ENCODE measurements at regions of chr12 and their contacts with region 1.

Region 1: DNA sequence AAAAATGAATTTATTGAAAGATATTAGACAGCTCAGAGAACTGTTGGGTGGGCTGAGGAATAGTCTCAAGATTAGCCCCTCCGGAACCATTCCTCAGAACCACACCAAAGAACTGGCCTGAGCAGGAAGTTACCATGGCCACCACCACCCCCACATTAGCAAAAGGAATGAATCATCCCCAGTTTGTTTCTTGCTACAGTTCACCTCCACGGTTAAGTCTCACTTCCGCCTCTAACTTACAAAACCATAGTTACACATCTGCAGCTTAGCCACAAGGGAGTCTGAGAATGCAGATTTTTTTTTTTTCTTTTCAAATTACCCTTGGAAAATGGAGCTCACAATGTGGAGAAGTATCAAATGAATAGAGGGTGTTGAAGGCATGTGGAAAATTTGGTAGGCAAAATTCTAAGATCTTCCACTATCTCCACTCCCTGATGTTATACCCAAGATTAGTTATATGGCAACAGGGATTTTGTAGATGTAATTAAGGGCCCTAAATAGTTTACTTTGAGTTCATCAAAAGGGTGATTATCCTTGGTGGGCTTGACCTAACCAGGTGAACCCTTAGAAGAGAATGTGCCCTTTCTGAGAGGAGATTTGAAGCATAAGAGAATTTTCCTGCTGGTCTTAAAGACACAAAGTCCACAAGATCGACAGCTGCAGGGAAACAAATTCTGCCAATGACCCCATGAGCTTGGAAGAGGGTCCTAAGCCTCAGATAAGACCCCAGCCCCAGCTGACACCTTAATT is 129.8 kb upstream of the KRR1 start:
- DNase-seq: peak; percentile 78
- H3K4me3 Mint-ChIP-seq: peak overlapping the region; percentile 1
- H3K27ac Mint-ChIP-seq: peak overlapping the region; percentile 79
- H3K4me1 Mint-ChIP-seq: peaks cover 31% of the 10 kb centered on the region
- H3K27me3 Mint-ChIP-seq: no peaks in the 10 kb centered on the region

Region 2: DNA sequence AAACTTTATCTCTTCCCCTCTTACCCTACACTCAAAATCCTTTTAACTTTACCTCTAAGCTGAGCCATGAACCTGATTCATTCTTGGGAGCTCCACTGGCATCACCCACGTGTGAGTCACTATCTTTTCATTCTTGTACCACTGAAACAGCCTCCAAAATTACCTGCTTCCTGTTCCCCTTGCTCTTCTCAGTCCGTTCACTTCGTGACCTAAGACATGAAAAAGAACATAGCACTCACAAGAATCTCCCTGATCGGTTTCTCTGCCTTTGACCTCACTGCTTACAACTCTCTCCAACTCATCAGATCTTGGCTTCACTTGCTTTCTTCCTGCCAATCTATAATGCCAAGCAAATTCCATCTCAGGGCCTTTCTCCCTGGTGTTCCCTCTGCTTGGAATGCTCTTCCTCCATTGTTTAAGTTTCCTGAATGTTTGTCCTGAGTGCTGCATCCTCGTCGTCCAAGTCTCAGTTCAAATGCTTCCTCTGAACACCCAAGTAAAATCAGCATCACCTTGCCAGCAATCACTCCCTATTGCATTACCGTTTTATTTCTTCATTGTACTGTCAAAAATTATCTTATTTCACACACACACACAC is 151.5 kb before region 1 on chr12:
- intact Hi-C with region 1: loop called (anchors 2 kb)
- DNase-seq: peak; percentile 63
- H3K4me3 Mint-ChIP-seq: peak overlapping the region; percentile 39
- H3K27ac Mint-ChIP-seq: peak overlapping the region; percentile 52
- H3K4me1 Mint-ChIP-seq: peaks cover 22% of the 10 kb centered on the region
- H3K27me3 Mint-ChIP-seq: no peaks in the 10 kb centered on the region

Region 3: DNA sequence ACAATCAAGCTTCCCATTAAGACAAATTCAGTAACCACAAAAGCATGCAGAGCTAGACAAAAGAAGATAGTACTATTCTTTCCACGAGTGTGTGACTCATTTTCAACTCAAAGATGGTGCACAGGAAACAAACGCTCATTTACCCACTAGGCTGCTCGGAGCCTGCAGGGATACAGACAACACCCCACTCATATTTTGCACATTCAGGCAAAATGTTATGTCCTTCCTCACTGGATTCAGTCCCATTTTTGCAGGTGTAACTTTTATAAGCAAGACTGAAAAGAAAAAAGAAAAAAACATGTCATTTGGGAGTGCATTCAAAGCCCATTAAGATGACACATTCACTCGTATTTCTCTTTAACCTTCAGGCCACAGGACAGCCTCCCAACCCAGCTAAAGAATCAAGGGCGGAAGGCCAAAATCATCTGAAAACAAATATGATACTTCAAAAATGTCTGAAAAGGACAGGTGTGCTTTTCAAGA is 17.7 kb after region 1 on chr12:
- intact Hi-C with region 1: loop called (anchors 1 kb)
- DNase-seq: peak; percentile 66
- H3K4me3 Mint-ChIP-seq: no peak overlapping the region
- H3K27ac Mint-ChIP-seq: peak overlapping the region; percentile 35
- H3K4me1 Mint-ChIP-seq: peaks cover 21% of the 10 kb centered on the region
- H3K27me3 Mint-ChIP-seq: peaks cover 3% of the 10 kb centered on the region

Region 4: DNA sequence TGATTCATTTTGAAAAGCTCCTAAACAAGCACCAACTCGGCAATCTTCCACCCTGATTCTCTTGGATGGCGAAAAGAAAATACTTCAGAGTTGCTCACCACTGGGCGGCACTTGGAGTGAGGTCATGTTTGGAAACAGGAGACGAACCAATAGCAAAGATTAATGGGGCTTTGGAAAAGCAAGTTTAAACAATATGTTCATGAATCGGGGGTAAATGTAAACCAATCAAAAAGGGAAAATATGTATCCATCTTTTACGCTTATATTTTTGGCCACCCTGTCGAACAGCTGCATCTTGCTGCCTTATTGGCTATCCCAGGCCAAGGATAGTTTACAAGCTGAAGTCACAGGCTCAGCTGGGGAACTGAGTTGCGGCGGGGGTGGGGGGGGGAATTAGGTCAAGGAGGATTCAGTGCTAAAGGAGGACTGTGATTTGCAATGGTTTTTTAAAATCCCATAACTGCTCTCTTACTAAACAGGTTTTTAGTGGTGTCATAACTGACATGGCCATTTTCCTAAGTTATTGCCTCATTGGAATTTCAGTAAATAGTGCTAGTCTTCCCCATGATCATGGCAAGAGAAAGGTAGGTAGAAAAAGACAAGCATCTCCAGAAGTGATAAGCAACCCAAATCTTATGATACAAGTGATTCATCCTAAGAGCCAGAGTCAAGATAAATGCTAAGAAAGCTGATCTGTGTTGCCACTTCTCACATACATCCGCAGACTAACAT is 179.8 kb after region 1 on chr12:
- intact Hi-C with region 1: no loop called
- DNase-seq: no peak
- H3K4me3 Mint-ChIP-seq: no peak overlapping the region
- H3K27ac Mint-ChIP-seq: no peak overlapping the region
- H3K4me1 Mint-ChIP-seq: peaks cover 4% of the 10 kb centered on the region
- H3K27me3 Mint-ChIP-seq: peaks cover 28% of the 10 kb centered on the region

Region 5: DNA sequence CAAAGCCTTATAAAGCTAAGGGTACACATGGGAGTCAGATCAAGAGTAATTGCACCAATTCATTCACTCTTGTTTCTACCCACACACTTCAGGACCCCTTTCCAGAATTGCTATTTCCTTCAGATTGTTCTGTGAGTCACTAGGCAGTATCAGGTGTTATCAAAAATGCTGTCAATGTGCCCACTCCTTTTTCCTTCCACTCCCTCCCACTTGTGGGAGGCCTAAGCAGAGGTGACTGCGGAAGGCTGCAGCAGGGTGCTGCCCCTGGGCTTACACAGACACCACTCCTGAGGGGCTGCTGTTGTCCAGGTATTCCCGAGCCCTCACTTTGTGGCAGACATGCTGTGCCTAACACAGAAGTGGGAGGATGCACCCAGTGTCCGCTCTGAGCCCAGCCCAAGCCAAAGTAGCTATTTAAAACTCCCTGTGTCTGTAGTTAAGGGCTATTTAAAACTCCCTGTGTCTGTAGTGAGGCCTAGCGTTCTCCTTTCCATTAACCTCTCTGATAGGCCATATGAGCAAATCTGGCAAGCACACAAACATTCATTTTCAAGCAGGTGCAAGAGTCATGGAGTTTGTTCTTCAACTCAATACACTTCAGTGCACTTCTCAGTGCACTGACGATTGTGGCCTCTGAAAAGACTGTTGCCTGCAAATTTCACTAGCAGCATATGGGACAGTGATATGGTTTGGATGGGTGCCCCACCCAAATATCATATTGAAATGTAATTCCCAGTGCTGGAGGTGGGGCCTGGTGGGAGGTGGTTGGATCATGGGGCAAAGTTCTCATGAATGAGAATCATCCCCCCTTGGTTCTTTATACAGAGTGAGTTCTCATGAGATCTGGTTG is 272.5 kb after region 1 on chr12:
- intact Hi-C with region 1: loop called (anchors 1 kb)
- DNase-seq: peak; percentile 63
- H3K4me3 Mint-ChIP-seq: no peak overlapping the region
- H3K27ac Mint-ChIP-seq: peak overlapping the region; percentile 65
- H3K4me1 Mint-ChIP-seq: peaks cover 25% of the 10 kb centered on the region
- H3K27me3 Mint-ChIP-seq: peaks cover 3% of the 10 kb centered on the region

Region 6: DNA sequence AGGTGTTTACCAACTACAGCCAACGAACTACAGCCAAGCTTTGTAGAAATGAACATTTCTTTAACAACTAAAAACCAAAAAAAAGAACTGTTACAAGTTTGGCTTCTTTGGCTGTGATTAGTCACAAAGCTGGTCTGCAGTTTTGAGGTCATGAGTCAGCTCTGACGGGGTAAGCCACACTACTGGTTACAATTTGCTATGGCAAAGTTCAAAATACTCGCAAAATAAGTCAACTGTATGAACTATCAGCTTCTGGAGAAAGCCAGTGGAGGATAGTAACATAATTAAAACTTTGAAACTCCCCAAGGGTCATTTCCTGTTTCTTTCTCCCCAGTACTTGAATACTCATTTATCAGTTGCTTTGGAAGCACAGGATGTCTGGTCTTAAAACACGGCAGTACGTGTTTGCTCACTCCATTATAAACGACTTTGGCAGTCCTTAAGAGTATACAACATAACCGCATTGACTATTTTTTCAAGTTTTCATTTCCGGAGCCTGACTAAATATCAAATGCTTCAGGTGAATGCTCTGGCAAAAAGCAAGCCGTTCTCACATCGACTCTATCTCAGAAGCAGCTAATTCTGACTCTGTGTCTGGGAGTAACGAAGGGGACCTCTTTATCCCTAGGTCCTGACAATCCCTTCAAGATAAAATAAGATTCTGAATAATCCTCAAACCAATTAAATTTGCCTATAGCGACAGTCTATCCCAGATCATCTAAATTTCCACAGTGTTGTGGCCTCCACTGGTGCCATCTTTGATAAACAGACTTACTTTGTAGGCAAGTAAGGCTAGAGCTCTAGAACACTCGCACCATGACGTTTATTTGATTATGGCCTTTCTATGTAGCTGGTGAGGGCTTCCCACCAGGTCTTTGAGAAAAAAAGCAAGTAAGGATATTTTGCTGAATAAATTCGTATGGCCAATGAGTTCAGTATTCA is 379.8 kb after region 1 on chr12:
- intact Hi-C with region 1: loop called (anchors 1 kb)
- DNase-seq: peak; percentile 91
- H3K4me3 Mint-ChIP-seq: peak overlapping the region; percentile 72
- H3K27ac Mint-ChIP-seq: peak overlapping the region; percentile 98
- H3K4me1 Mint-ChIP-seq: peaks cover 51% of the 10 kb centered on the region
- H3K27me3 Mint-ChIP-seq: no peaks in the 10 kb centered on the region